GM12878 (cell line): ENCODE measurements at regions of chr20 and their contacts with region 1.

Region 1: DNA sequence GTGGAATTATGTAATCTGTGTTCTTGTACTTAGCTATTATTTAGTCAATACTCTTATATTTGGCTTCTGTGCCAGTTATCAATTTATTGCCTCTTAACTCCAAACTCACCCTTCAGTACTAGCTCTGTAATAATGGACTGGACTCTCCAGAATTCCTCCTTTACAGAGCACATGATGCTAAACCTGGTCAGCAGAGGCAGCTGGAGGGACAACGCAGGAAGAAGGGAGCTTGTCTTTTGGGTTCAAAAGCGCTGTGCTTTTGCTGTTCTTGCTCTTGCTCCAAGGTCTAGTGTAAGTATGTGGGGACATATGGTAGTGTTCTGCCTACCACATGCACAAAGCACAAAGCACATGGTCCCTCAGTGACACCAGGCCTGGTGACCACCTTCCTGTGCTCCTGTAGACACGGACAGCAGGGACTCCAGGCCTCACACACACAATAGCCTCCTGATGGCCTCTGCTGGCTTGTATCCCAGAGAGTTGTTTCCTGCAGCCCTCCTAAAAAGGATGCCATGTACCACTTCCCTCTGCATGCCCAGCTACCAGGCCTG is 46.1 kb downstream of the CHD6 start:
- DNase-seq: no peak
- ATAC-seq: no peak
- H3K4me3 ChIP-seq: no peak overlapping the region
- H3K27ac ChIP-seq: no peak overlapping the region
- H3K4me1 ChIP-seq: peaks cover 5% of the 10 kb centered on the region; the same call in 1 of the 2 replicates
- H3K27me3 ChIP-seq: no peaks in the 10 kb centered on the region
- CTCF ChIP-seq: no peak
- EP300 ChIP-seq: no peak
- POLR2A ChIP-seq: no peak
- RAD21 ChIP-seq: no peak

Region 2: DNA sequence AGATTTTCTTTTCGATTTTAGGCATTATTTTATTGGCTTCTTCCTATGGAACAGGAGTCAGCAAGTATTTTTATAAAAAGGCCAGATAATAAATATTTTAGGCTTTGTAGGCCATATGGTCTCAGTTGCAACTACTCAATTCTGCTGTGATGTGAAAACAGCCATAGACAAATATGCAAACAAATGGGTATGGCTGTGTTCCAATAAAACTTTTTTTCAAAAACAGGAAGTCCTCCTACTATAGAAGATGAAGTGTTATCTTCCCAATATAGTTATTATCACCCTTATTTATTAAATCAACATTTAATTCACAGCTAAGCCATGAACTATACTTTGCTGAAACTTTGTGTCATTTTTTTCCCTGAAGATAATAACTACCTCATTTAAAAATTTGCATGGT is 11.1 kb before region 1 on chr20:
- CTCF ChIA-PET with region 1: interaction called, 22 read pairs
- POLR2A ChIA-PET with region 1: interaction called, 4 read pairs
- RAD21 ChIA-PET with region 1: interaction called, 6 read pairs
- SMC1A ChIA-PET with region 1: interaction called, 12 read pairs
- in situ Hi-C with region 1: no loop called
- intact Hi-C with region 1: no loop called
- DNase-seq: no peak
- ATAC-seq: peak; percentile 49
- H3K4me3 ChIP-seq: no peak overlapping the region
- H3K27ac ChIP-seq: no peak overlapping the region
- H3K4me1 ChIP-seq: peaks cover 24% of the 10 kb centered on the region
- H3K27me3 ChIP-seq: no peaks in the 10 kb centered on the region
- CTCF ChIP-seq: no peak
- EP300 ChIP-seq: no peak
- POLR2A ChIP-seq: no peak
- RAD21 ChIP-seq: no peak